Gastrocnemius medialis (tissue), 4 donors: ENCODE measurements at regions of chr7 and their contacts with region 1.

Region 1: DNA sequence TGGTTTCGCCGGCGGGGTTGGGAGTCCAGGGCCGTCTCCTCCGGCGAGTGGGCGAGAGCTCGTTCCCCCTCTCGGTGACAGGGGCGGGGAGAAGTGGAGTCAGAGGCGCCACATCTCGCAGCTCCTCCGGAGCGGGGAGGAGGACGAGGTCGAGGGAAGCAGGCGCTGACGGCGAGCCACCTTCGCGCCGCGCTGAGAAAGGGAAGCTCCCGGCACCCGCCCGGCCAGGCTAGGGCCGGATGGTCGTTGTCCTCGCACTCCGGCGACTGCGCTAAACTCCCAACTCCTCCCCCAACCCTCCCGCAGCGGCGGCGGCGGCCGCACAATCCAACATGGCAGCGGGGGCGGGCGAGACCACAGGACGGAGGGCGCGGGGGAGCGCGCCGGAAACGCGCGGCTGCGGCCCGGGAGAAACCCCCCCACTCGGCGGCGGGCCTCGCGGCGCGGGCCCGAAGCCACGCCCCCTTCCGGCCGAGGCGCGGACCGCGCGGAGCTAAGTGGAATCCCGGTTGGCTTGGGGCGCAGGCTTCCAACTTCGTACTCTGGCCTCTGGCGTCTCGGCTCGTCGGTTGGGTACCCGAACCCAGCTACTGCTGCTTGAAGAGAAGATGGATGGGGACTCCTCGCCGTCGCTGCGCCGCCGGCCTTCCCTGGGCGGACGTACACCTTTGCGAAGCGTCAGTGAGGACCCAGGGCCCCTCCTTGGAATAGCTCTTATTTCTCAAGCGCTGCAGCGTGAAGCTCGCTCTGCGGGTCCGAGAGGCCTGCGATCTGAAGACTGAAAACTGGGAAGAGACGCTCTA is at the start of gene WASL:
- DNase-seq: peak; percentile 87 to 91
- ATAC-seq: peak; percentile 79 to 80
- H3K4me3 ChIP-seq: peak within 1 kb of the TSS; percentile 75 to 97 (median 91)
- H3K27ac ChIP-seq: peak within 1 kb of the TSS; percentile 96 to 99 (median 99)
- H3K4me1 ChIP-seq: peaks cover 50 to 51% of the 10 kb centered on the region in 2 donors
- H3K27me3 ChIP-seq: no peaks in the 10 kb centered on the region
- CTCF ChIP-seq: peak in 3 of 5 experiments; percentile 21 to 37 (median 32)
- POLR2A ChIP-seq: peak; percentile 97 to 98
- total RNA-seq, gene WASL: 29.0 to 40.4 (median 33.0) TPM

Region 2: DNA sequence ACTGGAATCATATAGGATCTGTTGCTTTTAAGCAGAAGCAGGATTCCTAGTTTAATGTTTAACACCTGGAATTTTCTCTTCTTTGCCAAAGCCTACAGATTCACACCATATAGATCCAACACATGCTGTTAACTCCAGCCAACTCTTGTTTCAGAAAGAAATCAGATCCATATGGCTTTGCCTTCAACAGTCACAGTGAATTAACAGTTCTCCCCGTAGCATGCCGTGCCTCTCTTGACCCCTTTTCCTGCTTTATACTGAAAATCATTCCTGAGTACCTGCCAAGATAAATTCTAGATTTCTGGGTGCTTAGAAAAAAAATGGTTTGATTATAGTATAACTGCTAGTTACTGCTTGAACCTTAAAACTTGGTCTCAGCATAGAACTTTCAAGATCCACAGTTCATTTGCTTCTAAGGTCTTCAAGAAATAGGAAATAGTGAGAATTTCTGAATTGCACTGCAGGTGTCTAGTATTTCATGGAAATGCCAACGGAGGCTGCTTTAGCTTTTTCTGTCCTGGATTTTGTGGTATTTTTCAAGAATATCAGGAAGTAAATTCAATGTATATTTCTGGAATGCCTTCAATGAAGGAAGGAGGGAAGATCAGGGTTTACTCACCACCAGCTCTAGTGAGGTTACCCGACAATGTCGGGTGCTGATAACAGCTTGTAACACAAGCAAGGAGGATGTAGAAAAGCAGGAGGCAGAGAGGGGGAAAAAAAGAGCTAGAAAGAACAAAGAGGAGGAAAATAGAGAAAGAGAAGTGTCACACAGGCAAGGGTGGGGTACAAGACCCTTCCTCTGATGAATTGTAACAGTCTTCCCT is 1611.5 kb before region 1 on chr7:
- in situ Hi-C with region 1: no loop called
- intact Hi-C with region 1: loop called (anchors 10 kb)
- DNase-seq: no peak
- ATAC-seq: no peak
- H3K4me3 ChIP-seq: peak overlapping the region; percentile 37 to 59 (median 44)
- H3K27ac ChIP-seq: peak overlapping the region in 3 of 4 donors; percentile 2 to 45 (median 38)
- H3K4me1 ChIP-seq: peaks cover 15 to 25% of the 10 kb centered on the region in 2 donors
- H3K27me3 ChIP-seq: no peaks in the 10 kb centered on the region
- CTCF ChIP-seq: no peak
- POLR2A ChIP-seq: no peak

Region 3: GRCh38 chr7:123557398-123558288 is 191.3 kb before region 1 on chr7 and contains the start of gene NDUFA5:
- in situ Hi-C with region 1: no loop called
- intact Hi-C with region 1: loop called (anchors 1 kb)
- DNase-seq: peak; percentile 98 to 99
- ATAC-seq: peak; percentile 99
- H3K4me3 ChIP-seq: peak within 1 kb of the TSS; percentile 71 to 99 (median 96)
- H3K27ac ChIP-seq: peak within 1 kb of the TSS; percentile 91 to 99 (median 96)
- H3K4me1 ChIP-seq: peaks cover 27 to 40% of the 10 kb centered on the region in 2 donors
- H3K27me3 ChIP-seq: no peaks in the 10 kb centered on the region
- CTCF ChIP-seq: peak in 1 of 5 experiments; percentile 2
- POLR2A ChIP-seq: peak; percentile 72 to 81
- total RNA-seq, gene NDUFA5: 82.8 to 148 (median 137) TPM

Region 4: GRCh38 chr7:123570401-123571182 is 178.3 kb before region 1 on chr7:
- in situ Hi-C with region 1: no loop called
- intact Hi-C with region 1: no loop called
- DNase-seq: no peak
- ATAC-seq: no peak
- H3K4me3 ChIP-seq: no peak overlapping the region
- H3K27ac ChIP-seq: no peak overlapping the region
- H3K4me1 ChIP-seq: peaks cover 4 to 6% of the 10 kb centered on the region in 2 donors
- H3K27me3 ChIP-seq: no peaks in the 10 kb centered on the region
- CTCF ChIP-seq: no peak
- POLR2A ChIP-seq: no peak

Region 5: DNA sequence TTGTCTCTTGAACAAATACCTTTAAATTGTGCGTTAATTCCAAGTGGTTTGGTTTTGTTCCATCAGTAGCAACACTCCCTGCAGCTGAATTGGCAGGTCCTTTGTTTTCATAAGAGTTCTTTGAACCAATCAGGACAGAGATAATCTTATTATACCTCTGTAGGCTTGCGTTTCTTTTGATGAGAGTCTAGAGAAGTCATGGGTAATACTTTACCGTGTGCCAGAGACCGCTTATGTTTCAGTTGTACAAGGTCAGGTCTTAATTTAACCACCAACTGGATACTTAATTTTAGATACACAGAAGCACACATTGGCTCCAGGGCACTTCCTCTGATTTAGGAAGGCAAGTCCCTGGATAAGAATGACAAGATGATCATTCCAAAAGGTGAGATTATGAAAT is 147.4 kb before region 1 on chr7 and contains the start of gene ASB15:
- in situ Hi-C with region 1: no loop called
- intact Hi-C with region 1: loop called (anchors 5 kb)
- DNase-seq: peak; percentile 81 to 84
- ATAC-seq: peak; percentile 96 to 98
- H3K4me3 ChIP-seq: peak within 1 kb of the TSS; percentile 33 to 48 (median 36)
- H3K27ac ChIP-seq: peak within 1 kb of the TSS; percentile 91 to 93 (median 92)
- H3K4me1 ChIP-seq: peaks cover 25 to 47% of the 10 kb centered on the region in 2 donors
- H3K27me3 ChIP-seq: no peaks in the 10 kb centered on the region
- CTCF ChIP-seq: no peak
- POLR2A ChIP-seq: peak; percentile 46 to 72
- total RNA-seq, gene ASB15: 5.3 to 26.0 (median 10.4) TPM

Region 6: DNA sequence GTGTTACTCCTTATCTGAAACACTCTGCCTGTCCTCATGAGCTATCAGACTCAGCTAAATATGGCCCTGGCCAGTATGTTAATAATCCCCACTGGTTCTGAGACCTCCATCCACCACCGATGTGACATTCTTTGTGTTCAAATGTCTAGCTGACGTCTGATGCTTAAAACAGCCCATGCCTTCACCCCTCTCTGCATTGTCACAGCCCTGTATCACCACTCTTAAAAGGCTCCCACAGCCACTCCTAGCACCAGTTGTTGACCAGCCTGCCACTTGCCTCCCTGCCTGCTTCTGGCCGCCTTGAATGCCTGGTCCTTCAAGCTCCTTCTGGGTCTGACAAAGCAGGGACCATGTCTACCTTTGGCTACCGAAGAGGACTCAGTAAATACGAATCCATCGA is 93.3 kb before region 1 on chr7 and contains the start of gene LMOD2:
- in situ Hi-C with region 1: no loop called
- intact Hi-C with region 1: loop called (anchors 5 kb)
- DNase-seq: peak; percentile 78 to 92
- ATAC-seq: peak; percentile 68 to 81
- H3K4me3 ChIP-seq: peak within 1 kb of the TSS; percentile 58 to 73 (median 71)
- H3K27ac ChIP-seq: peak within 1 kb of the TSS; percentile 88 to 96 (median 96)
- H3K4me1 ChIP-seq: peaks cover 31 to 54% of the 10 kb centered on the region in 2 donors
- H3K27me3 ChIP-seq: no peaks in the 10 kb centered on the region
- CTCF ChIP-seq: no peak
- POLR2A ChIP-seq: peak; percentile 86 to 95
- total RNA-seq, gene LMOD2: 150 to 518 (median 314) TPM

Region 7: GRCh38 chr7:123692471-123692877 is 56.5 kb before region 1 on chr7:
- in situ Hi-C with region 1: no loop called
- intact Hi-C with region 1: no loop called
- DNase-seq: no peak
- ATAC-seq: no peak
- H3K4me3 ChIP-seq: no peak overlapping the region
- H3K27ac ChIP-seq: no peak overlapping the region
- H3K4me1 ChIP-seq: no peaks in the 10 kb centered on the region
- H3K27me3 ChIP-seq: no peaks in the 10 kb centered on the region
- CTCF ChIP-seq: no peak
- POLR2A ChIP-seq: no peak

Region 8: GRCh38 chr7:124929467-124930172 is 1180.7 kb after region 1 on chr7 and contains the start of gene POT1:
- in situ Hi-C with region 1: loop called in 1 of 4 experiments (anchors 25 kb)
- intact Hi-C with region 1: no loop called
- DNase-seq: peak; percentile 96 to 99
- ATAC-seq: peak; percentile 99 to 100
- H3K4me3 ChIP-seq: peak within 1 kb of the TSS; percentile 84 to 86 (median 84)
- H3K27ac ChIP-seq: peak within 1 kb of the TSS; percentile 88 to 93 (median 90)
- H3K4me1 ChIP-seq: peaks cover 11 to 20% of the 10 kb centered on the region in 2 donors
- H3K27me3 ChIP-seq: no peaks in the 10 kb centered on the region
- CTCF ChIP-seq: no peak
- POLR2A ChIP-seq: peak; percentile 21 to 52
- total RNA-seq, gene POT1: 5.1 to 20.3 (median 10.4) TPM